ENCODE measurements at regions of chr10 and their contacts with region 1.

Region 1: DNA sequence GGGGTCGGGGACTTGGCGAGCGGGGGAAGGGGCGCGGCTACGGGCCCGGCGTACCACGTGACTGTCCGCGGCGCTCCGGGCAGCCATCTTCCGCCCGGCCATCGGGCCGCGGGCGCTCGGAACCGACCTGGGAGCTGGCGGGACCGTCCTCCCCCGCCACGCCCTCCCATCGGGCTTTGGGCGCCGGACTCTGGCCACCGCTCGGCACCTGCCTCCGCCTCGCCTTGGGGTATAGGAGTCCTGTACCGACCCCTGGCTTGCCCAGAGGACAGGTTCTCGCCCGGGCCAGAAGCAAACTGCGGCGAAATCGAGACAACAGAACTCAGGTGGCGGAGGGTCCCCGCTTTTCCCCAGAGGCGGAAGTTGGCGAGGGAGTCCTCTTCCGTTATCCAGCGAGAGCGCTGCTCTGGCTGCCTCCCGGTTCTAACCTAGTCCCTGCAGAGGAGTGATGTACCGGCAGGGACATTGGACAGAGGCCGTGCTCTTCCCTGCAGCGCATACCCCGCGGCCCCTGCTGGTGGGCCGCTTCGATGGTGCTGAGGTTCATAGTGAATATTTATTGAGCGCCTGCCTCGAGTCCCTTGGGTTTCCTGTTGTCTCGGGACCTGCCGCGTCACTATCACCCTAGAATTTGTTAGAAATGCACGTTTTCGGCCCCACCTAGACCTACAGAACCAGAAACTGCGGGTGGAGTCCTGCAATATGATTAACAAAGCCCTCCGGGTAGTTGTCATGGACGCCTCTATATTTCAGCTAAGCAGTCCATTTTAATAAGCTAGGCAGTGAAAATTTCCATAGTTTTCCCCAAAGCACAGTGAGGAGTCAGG is 1.3 kb upstream of the SGMS1 start:
- DNase-seq: peak; percentile 64
- ATAC-seq: peak; percentile 66
- H3K4me3 ChIP-seq: peak overlapping the region; percentile 63
- H3K27ac ChIP-seq: peak overlapping the region; percentile 97
- H3K4me1 ChIP-seq: no peaks in the 10 kb centered on the region
- H3K27me3 ChIP-seq: no peaks in the 10 kb centered on the region
- CTCF ChIP-seq: peak; percentile 68
- POLR2A ChIP-seq: 0 out of 2 replicates have a peak, but pooled peaks have one; percentile 16
- RAD21 ChIP-seq: peak; percentile 69

Region 2: GRCh38 chr10:50325449-50326171 is 299.5 kb before region 1 on chr10:
- CTCF ChIA-PET with region 1: no interaction called
- POLR2A ChIA-PET with region 1: no interaction called
- dilution Hi-C with region 1: no loop called
- in situ Hi-C with region 1: no loop called
- intact Hi-C with region 1: loop called (anchors 5 kb)
- DNase-seq: peak; percentile 98
- ATAC-seq: peak; percentile 96
- H3K4me3 ChIP-seq: peak overlapping the region; percentile 8; the same call in 1 of the 2 replicates
- H3K27ac ChIP-seq: peak overlapping the region; percentile 33
- H3K4me1 ChIP-seq: peaks cover 7% of the 10 kb centered on the region; the same call in 1 of the 2 replicates
- H3K27me3 ChIP-seq: no peaks in the 10 kb centered on the region
- CTCF ChIP-seq: no peak
- POLR2A ChIP-seq: no peak
- RAD21 ChIP-seq: no peak

Region 3: GRCh38 chr10:50417886-50418830 is 206.9 kb before region 1 on chr10:
- CTCF ChIA-PET with region 1: interaction called, 4 read pairs
- POLR2A ChIA-PET with region 1: no interaction called
- dilution Hi-C with region 1: no loop called
- in situ Hi-C with region 1: loop called (anchors 5 kb)
- intact Hi-C with region 1: loop called (anchors 1 kb)
- DNase-seq: peak; percentile 80
- ATAC-seq: peak; percentile 93
- H3K4me3 ChIP-seq: peak overlapping the region; percentile 47
- H3K27ac ChIP-seq: peak overlapping the region; percentile 24
- H3K4me1 ChIP-seq: peaks cover 10% of the 10 kb centered on the region; the same call in 1 of the 2 replicates
- H3K27me3 ChIP-seq: no peaks in the 10 kb centered on the region
- CTCF ChIP-seq: no peak; the same call in 1 of the 2 replicates
- POLR2A ChIP-seq: 0 out of 2 replicates have a peak, but pooled peaks have one; percentile 46
- RAD21 ChIP-seq: no peak

Region 4: GRCh38 chr10:50552771-50553535 is 72.1 kb before region 1 on chr10:
- CTCF ChIA-PET with region 1: interaction called, 5 read pairs
- POLR2A ChIA-PET with region 1: interaction called, 3 read pairs
- dilution Hi-C with region 1: no loop called
- in situ Hi-C with region 1: no loop called
- intact Hi-C with region 1: loop called (anchors 1 kb)
- DNase-seq: peak; percentile 36
- ATAC-seq: peak; percentile 24
- H3K4me3 ChIP-seq: no peak overlapping the region
- H3K27ac ChIP-seq: peak overlapping the region; percentile 95; the same call in 1 of the 2 replicates
- H3K4me1 ChIP-seq: peaks cover 23% of the 10 kb centered on the region
- H3K27me3 ChIP-seq: no peaks in the 10 kb centered on the region
- CTCF ChIP-seq: peak; percentile 39
- POLR2A ChIP-seq: no peak
- RAD21 ChIP-seq: peak; percentile 51

Region 5: DNA sequence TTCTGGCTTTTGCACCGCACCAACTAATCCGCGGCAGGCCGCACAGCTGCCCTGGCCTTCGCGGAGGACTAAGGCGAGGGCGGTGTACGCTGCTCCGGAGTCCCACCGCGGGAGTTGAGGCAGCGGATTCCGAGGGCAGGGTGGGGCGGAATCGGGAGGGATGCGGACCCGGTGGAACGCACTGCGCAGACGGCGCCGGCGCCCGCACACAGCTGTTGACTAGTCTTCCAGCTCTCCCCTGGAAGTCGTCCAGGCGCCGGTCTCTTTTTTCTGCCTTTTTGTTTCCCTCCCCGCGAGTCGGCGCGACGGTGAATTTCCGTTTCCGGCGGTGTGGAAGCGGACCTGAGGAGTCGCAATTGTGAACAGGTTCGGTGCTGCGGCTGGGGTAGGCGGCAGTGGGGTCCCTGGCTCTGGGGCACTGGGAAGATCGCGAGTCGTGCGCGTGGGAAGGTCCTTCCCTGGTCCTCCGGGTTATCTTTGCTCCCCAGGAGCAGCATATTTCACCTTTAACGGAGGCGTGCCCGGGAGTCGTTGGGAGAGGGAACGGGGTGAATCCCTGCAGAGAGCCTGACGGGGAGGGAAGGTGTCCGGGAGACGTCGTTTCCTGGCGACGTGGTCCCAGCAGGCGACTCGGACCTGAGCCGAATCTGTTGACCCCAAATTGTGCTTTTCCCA is 114.7 kb after region 1 on chr10 and contains the start of gene ASAH2B:
- CTCF ChIA-PET with region 1: no interaction called
- POLR2A ChIA-PET with region 1: no interaction called
- dilution Hi-C with region 1: no loop called
- in situ Hi-C with region 1: no loop called
- intact Hi-C with region 1: loop called (anchors 5 kb)
- DNase-seq: peak; percentile 74
- ATAC-seq: peak; percentile 90
- H3K4me3 ChIP-seq: peak within 1 kb of the TSS; percentile 82
- H3K27ac ChIP-seq: peak within 1 kb of the TSS; percentile 92
- H3K4me1 ChIP-seq: no peaks in the 10 kb centered on the region
- H3K27me3 ChIP-seq: no peaks in the 10 kb centered on the region
- CTCF ChIP-seq: no peak
- POLR2A ChIP-seq: peak; percentile 59; the same call in 1 of the 2 replicates
- RAD21 ChIP-seq: no peak
- total RNA-seq, gene ASAH2B: 4.4 and 5.0 TPM in 2 replicates

Measured in IMR-90 (cell line).